Activated T-helper 1 cell treated with anti-CD3 and anti-CD28 coated beads, Interleukin-12 subunit alpha, Interleukin-12 subunit beta, Interleukin-2, Interleukin-4 antibody, amounts not matched to agents 30 ng/mL and 10 ng/mL and 1 ng/mL, durations not matched to agents 14 hours and 24 hours and 36 hours (primary cell): ENCODE measurements at regions of chr22 and their contacts with region 1.

Region 1: GRCh38 chr22:30591588-30592359 is at the start of gene PES1:
- DNase-seq: peak; percentile 93
- H3K4me3 Mint-ChIP-seq: no peak within 1 kb of the TSS
- H3K27ac Mint-ChIP-seq: no peak within 1 kb of the TSS
- H3K4me1 Mint-ChIP-seq: no peaks in the 10 kb centered on the region
- H3K27me3 Mint-ChIP-seq: peaks cover 12% of the 10 kb centered on the region
- total RNA-seq, gene PES1: 168 and 169 TPM in 2 replicates

Region 2: GRCh38 chr22:29766632-29767170 is 825.1 kb before region 1 on chr22 and contains the start of gene ZMAT5:
- intact Hi-C with region 1: loop called (anchors 2 kb)
- DNase-seq: peak; percentile 90
- H3K4me3 Mint-ChIP-seq: peak within 1 kb of the TSS; percentile 98
- H3K27ac Mint-ChIP-seq: peak within 1 kb of the TSS; percentile 88
- H3K4me1 Mint-ChIP-seq: peaks cover 40% of the 10 kb centered on the region
- H3K27me3 Mint-ChIP-seq: no peaks in the 10 kb centered on the region
- total RNA-seq, gene ZMAT5: 28.4 and 28.5 TPM in 2 replicates

Region 3: GRCh38 chr22:30289134-30289979 is 302.4 kb before region 1 on chr22 and contains the start of gene CASTOR1:
- intact Hi-C with region 1: loop called (anchors 5 kb)
- DNase-seq: peak; percentile 90
- H3K4me3 Mint-ChIP-seq: peak within 1 kb of the TSS; percentile 87
- H3K27ac Mint-ChIP-seq: peak within 1 kb of the TSS; percentile 81
- H3K4me1 Mint-ChIP-seq: peaks cover 56% of the 10 kb centered on the region
- H3K27me3 Mint-ChIP-seq: no peaks in the 10 kb centered on the region
- total RNA-seq, gene CASTOR1: 5.6 and 8.8 TPM in 2 replicates

Region 4: GRCh38 chr22:30523776-30524489 is 67.8 kb before region 1 on chr22:
- intact Hi-C with region 1: no loop called
- DNase-seq: no peak
- H3K4me3 Mint-ChIP-seq: no peak overlapping the region
- H3K27ac Mint-ChIP-seq: no peak overlapping the region
- H3K4me1 Mint-ChIP-seq: no peaks in the 10 kb centered on the region
- H3K27me3 Mint-ChIP-seq: peaks cover 11% of the 10 kb centered on the region

Region 5: DNA sequence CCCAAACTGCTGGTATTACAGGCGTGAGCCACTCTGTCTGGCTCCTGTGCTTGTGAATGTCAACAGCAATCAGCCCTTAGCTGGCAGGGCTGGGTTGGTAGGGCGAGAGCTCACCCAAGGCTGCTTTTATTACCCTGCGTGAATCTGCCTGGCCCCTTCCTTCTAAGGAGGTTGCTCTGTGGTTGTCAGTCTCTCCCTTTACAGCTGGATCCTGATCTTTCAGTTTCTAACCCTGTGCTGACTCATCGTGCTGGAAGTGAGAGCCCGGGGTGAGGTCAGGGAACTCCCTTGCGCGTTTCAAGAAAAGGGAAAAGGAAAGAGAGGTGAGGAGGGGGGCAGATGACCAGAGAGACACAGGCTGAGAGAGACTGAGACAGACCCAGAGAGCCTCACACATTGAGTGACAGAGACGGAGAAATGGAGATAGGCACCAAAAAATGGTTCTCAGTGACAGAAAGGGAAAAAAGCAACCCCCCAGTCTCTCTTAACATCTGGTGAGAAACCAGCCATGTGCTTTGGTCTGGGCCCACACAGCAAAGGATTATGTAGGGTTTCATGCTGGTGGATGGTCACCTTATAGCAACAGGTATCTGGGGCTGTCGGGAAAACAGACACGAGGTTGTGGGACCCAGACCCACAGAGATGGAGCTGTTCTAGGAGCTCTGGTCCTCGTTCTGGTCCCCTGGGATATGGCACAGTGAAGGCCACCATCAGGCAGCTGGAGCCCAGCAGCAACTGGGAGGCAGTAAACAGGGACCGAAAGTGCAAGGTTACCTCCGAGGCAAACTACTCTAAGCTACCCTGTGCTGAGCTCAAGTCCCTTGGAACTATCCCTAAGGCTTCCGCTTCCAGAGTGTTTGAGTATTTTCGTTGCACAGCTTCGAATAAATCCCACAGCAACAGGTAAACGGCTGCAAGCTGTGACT is 17.7 kb after region 1 on chr22:
- intact Hi-C with region 1: loop called (anchors 1 kb)
- DNase-seq: peak; percentile 52
- H3K4me3 Mint-ChIP-seq: peak overlapping the region; percentile 38
- H3K27ac Mint-ChIP-seq: peak overlapping the region; percentile 66
- H3K4me1 Mint-ChIP-seq: peaks cover 61% of the 10 kb centered on the region
- H3K27me3 Mint-ChIP-seq: no peaks in the 10 kb centered on the region

Region 6: DNA sequence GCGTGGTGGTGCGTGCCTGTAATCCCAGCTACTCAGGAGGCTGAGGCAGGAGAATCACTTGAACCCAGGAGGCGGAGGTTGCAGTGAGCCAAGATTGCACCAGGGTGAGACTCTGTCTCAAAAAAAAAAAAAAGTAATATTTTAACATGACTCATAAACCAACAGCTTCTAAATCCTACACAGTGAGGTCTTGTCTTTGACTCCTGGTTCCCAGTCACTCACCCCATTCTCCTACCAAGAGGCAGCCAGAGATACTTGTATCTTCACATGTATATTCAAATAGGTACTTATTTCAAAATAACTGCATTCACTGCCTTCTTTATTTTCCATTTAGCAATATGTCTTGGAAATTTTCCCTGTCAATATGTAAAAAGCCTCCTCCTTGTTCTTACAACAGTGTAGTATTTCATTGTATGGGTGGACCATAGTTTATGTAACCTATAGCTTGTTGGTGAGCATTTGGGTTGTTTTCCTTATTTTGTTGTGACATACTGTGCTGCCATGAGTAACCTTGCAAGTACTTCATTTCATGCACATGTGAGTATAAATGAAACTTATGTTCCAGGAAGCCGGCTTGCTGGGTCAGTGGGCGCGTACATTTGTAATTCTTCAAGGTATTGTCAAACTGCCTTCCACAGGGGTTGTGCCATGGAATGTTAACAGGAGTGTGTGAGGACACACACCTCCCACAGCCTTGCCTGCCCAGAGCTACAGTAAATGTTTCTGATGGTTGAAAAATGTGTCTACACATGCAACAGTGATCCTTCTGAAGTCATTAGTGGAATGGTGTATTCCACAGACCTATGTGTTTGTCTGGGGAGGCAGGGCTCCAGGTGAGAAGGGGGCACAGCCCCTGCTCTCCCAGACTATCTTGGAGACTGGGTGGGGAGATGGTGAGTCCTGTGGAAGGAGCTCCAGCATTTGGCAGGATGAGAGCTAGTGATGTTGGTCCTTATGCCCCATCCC is 150.8 kb after region 1 on chr22:
- intact Hi-C with region 1: loop called (anchors 5 kb)
- DNase-seq: no peak
- H3K4me3 Mint-ChIP-seq: peak overlapping the region; percentile 48
- H3K27ac Mint-ChIP-seq: peak overlapping the region; percentile 96
- H3K4me1 Mint-ChIP-seq: peaks cover 81% of the 10 kb centered on the region
- H3K27me3 Mint-ChIP-seq: no peaks in the 10 kb centered on the region

Region 7: DNA sequence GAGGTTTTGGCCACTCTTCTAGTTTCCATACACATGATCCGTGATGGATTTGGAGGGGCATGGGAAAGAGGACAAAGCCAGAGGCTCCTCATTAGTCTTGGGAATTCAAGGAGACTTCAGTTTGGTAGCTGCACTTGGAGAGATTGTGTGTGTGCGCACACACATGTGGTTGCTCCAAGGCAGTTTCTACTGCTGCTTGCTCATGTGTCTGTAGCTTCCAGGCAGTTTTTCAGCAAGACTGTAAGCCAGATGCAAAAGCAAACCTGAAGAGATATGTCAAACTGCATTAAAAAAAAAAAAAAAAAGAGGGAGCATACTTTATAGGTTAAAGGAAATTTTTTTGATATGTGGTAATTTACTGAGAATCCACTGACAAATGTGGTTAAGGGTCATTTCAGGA is 198.6 kb after region 1 on chr22:
- intact Hi-C with region 1: no loop called
- DNase-seq: no peak
- H3K4me3 Mint-ChIP-seq: no peak overlapping the region
- H3K27ac Mint-ChIP-seq: no peak overlapping the region
- H3K4me1 Mint-ChIP-seq: no peaks in the 10 kb centered on the region
- H3K27me3 Mint-ChIP-seq: peaks cover 2% of the 10 kb centered on the region

Region 8: DNA sequence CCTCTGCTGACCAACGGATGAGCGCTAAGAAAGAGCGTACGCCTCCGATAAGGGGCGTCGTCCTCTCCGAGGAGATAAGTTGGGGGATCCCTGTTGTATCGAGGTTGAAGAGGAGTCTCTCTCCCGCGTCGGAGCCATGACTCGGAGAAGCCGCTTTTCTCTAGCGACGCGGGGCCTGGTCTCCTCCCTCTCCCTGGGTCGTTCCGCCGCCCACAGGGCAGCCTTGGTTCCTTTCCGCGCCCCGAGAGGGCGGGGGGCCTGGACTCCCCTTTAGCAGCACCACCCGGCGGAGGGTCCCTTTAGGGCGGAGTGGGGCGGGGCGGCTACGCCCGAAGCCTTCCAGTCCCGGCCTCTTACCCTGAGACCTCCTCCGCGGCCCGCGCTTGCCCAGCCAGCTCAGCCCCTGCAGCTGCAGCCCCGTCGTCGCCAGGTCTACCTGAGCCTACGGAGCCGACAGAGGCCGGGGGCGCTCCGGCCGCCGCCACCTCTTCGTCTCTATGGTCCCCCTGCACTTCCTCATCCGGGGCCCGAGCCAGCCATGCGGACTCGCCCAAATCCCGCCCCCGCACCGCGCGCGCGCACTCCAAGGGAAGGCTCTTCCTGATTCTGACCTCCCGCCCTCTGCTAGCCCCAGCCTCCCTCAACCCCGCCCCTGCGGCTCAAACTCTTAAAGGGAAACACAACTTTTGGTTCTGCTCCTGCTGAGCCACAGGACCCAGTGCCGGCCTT is 1158.0 kb after region 1 on chr22 and contains the start of gene PRR14L:
- intact Hi-C with region 1: loop called (anchors 5 kb)
- DNase-seq: peak; percentile 98
- H3K4me3 Mint-ChIP-seq: peak within 1 kb of the TSS; percentile 87
- H3K27ac Mint-ChIP-seq: peak within 1 kb of the TSS; percentile 97
- H3K4me1 Mint-ChIP-seq: peaks cover 49% of the 10 kb centered on the region
- H3K27me3 Mint-ChIP-seq: no peaks in the 10 kb centered on the region
- total RNA-seq, gene PRR14L: 65.2 and 69.6 TPM in 2 replicates